Activated CD4-positive, alpha-beta memory T cell treated with anti-CD3 and anti-CD28 coated beads, Interleukin-2, amount 10 ng/mL, durations not matched to agents 7 days and 5 days (primary cell): ENCODE measurements at regions of chr3 and their contacts with region 1.

Region 1: DNA sequence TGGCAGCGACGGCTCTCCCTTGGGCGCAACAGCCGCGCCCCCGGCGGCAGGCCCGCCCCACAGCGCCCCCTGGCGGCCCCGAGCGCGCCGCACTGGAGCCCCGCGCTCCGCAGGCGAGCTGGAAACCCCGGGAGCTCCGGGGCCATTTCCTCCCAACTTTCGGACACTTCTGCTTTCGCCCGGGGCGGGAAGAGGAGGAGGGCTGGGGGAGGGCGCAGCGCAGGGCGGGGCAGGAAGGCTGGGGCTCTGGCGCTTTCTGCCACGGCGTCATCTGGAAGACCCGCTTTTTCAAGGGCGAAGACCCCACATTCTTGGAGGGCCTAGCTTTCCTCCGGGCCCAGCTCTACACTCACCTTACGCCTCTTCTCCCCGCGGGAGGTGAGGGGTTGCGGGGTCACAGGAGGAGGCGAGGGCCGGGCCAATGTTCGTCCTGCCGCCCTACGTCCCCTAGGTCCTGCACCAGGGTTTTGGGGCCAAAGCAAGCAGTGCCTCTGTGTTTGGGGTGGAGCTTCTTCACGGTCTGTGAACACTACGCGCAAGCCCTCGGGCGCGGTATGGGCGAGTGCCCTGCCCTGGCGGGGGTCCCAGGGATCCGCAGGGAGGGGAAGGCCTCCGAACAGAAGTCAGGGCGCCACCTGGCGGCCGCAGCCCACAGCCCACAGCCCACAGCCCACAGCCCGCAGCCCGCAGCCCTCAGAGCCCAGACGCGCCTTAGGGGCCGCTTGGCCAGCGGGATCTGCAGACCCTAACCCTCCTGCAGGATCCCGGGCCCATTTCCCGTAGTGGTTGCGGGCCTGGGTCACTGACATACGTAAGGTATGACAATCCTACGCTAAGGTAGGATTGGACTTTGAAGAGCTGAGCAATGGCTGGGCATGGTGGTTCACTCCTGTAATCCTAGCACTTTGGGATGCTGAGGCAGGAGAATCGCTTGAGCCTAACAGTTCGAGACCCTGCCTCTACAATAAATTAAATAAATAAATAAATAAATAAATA is 31.1 kb downstream of the FOXL2 start:
- DNase-seq: peak; percentile 80
- H3K4me3 Mint-ChIP-seq: peak overlapping the region; percentile 74
- H3K27ac Mint-ChIP-seq: peak overlapping the region; percentile 56
- H3K4me1 Mint-ChIP-seq: peaks cover 9% of the 10 kb centered on the region
- H3K27me3 Mint-ChIP-seq: peaks cover 3% of the 10 kb centered on the region

Region 2: GRCh38 chr3:138314751-138315150 is 601.0 kb before region 1 on chr3:
- CTCF ChIA-PET with region 1: no interaction called
- POLR2A ChIA-PET with region 1: no interaction called
- DNase-seq: no peak
- H3K4me3 Mint-ChIP-seq: no peak overlapping the region
- H3K27ac Mint-ChIP-seq: no peak overlapping the region
- H3K4me1 Mint-ChIP-seq: no peaks in the 10 kb centered on the region
- H3K27me3 Mint-ChIP-seq: peaks cover 24% of the 10 kb centered on the region

Region 3: GRCh38 chr3:138594150-138594934 is 321.5 kb before region 1 on chr3 and contains the start of gene CEP70:
- CTCF ChIA-PET with region 1: interaction called, 181 read pairs
- POLR2A ChIA-PET with region 1: interaction called, 15 read pairs
- DNase-seq: peak; percentile 87
- H3K4me3 Mint-ChIP-seq: peak within 1 kb of the TSS; percentile 76
- H3K27ac Mint-ChIP-seq: peak within 1 kb of the TSS; percentile 69
- H3K4me1 Mint-ChIP-seq: peaks cover 11% of the 10 kb centered on the region
- H3K27me3 Mint-ChIP-seq: no peaks in the 10 kb centered on the region
- total RNA-seq, gene CEP70: 9.0 to 9.6 TPM

Region 4: DNA sequence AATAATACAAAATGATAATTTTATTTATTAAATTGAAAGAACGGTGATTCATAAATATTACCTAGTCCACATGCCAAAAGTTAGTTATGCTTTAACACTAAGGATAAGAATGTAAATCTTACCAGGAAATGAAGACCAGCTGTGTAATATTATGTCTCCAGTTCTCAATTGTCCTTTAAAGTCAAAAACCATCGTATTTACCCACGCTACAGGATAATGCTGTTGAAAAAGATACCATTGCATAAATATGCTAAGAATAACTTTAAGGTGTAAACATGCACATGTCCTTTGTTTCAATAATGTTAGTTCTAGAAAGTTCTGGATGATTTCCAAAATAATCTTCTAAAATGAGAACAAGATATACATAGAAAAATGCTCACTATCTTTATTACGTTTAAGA is 203.7 kb before region 1 on chr3:
- CTCF ChIA-PET with region 1: interaction called, 30 read pairs
- POLR2A ChIA-PET with region 1: no interaction called
- DNase-seq: no peak
- H3K4me3 Mint-ChIP-seq: no peak overlapping the region
- H3K27ac Mint-ChIP-seq: no peak overlapping the region
- H3K4me1 Mint-ChIP-seq: no peaks in the 10 kb centered on the region
- H3K27me3 Mint-ChIP-seq: no peaks in the 10 kb centered on the region

Region 5: DNA sequence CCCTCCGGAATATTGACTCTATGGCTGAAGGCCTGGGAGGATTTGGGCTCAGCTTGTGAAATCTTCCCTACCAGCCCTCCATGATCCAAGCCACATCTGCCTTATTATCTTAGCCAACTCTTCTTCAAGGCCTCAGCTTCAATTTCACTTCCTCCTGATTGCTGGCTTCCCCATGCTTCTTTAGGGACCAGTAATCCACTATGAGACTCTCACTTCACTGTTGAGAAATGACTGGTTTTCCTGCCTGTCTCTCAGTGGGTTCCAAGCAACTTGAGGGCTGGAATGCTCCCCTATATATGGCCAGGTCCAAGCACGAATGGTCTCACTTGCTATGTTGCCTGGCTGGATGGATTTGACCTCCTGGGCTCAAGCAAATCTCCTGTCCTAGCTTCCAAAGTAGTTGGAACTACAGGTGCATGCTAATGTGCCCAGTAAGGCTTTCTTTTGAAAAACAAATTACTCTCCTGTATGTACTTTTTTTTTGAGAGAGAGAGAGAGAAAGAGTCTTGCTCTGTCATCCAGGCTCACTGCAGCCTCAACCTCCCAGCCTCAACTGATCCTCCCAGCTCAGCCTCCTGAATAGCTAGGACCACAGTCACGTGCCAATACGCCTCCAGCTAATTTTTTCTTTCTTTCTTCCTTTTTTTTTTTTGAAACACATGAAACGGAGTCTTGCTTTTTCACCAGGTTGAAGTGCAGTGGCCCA is 73.2 kb before region 1 on chr3:
- CTCF ChIA-PET with region 1: interaction called, 12 read pairs
- POLR2A ChIA-PET with region 1: interaction called, 3 read pairs
- DNase-seq: no peak
- H3K4me3 Mint-ChIP-seq: no peak overlapping the region
- H3K27ac Mint-ChIP-seq: no peak overlapping the region
- H3K4me1 Mint-ChIP-seq: no peaks in the 10 kb centered on the region
- H3K27me3 Mint-ChIP-seq: peaks cover 2% of the 10 kb centered on the region

Region 6: DNA sequence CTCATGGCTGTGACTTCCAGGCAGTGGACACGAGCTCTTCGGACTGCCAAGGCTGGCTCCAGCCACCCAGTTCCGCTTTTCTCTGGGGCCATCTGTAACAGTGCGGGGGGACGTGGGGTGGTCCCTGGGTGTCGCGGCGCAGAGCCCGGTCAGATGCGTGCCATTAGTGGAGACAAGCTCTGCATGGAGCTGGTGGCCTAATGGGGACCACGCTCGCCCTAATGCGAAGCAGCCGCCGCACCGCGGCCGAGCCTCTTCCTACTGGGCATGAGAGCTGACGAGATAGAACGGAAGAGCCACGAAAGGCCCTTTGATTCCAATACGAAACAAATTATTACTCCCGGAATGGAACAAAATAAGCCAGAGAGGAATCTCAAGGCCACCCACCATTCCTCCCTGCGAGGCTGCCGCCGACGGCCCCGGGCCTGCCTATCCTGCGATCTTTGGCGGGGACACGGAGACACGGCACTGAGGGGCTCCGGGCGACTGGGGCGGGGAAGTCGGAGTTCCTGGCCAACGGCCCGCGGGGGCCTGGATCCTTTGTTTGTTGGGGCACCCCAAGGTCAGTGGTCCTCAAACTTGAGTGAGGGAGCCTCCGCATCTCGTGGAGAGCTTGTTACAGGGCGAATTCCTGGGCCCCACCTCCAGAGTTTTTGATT is 13.1 kb after region 1 on chr3:
- CTCF ChIA-PET with region 1: interaction called, 54 read pairs
- POLR2A ChIA-PET with region 1: interaction called, 7 read pairs
- DNase-seq: no peak
- H3K4me3 Mint-ChIP-seq: no peak overlapping the region
- H3K27ac Mint-ChIP-seq: no peak overlapping the region
- H3K4me1 Mint-ChIP-seq: no peaks in the 10 kb centered on the region
- H3K27me3 Mint-ChIP-seq: peaks cover 23% of the 10 kb centered on the region